Naive thymus-derived CD4-positive, alpha-beta T cell (primary cell): ENCODE measurements at regions of chr17 and their contacts with region 1.

Region 1: GRCh38 chr17:14300575-14301278 is at the start of gene HS3ST3B1:
- DNase-seq: peak; percentile 93 to 100 (median 99)
- ATAC-seq: peak; percentile 90
- H3K4me3 ChIP-seq: peak within 1 kb of the TSS; percentile 99
- H3K4me3 Mint-ChIP-seq: peak within 1 kb of the TSS; percentile 85 to 100 (median 96)
- H3K27ac ChIP-seq: peak within 1 kb of the TSS; percentile 63
- H3K27ac Mint-ChIP-seq: peak within 1 kb of the TSS; percentile 86 to 94 (median 90)
- H3K4me1 ChIP-seq: peaks cover 39 to 44% of the 10 kb centered on the region in 2 donors
- H3K4me1 Mint-ChIP-seq: peaks cover 49 to 69% (median 62%) of the 10 kb centered on the region in 7 donors
- H3K27me3 ChIP-seq: peaks cover 10 to 22% of the 10 kb centered on the region in 2 donors
- H3K27me3 Mint-ChIP-seq: peaks cover 29 to 39% (median 37%) of the 10 kb centered on the region in 5 donors
- total RNA-seq, gene HS3ST3B1: 11.7 to 40.7 (median 30.8) TPM

Region 2: DNA sequence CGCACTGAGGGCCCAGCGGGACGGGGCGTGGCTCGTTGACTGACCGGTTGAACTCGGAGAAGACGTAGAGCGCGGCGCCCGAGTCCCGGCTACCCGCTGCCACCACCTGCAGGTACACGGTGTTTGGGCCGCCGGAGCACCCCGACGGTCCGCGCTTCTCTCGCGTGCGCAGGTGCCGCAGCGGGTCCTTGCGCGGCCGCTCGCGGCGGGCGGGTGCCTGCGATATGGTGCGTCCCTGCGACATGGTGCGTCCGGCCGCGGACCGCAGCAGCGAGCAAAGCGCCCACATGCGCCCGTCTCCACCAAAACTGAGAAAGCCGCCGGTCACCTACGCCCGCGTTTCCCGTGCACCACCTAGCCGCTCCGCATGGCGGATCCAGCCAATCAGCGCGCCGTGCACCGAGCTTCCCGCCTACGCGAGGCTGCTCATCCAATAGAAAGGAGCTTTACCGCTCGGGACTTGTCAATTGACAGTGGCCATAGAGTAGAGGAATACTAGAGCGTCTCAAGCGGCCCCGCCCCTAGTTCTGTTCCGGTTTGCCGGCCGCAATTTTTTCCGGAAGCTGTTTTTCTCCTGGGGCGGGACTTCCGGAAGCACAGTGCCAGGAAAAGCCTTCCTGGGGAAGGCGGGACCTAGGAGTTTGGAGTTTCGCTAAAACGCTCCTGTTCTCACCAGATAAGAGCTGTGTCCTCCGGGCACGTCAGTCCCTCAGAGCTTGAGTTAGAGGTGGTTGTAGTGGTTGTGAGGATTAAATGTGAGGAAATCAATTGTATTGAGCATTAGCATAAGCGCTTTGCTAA is 1282.9 kb before region 1 on chr17 and contains the start of gene ELAC2:
- CTCF ChIA-PET with region 1: no interaction called
- POLR2A ChIA-PET with region 1: interaction called, 12 read pairs
- intact Hi-C with region 1: loop called in 1 of 2 experiments (anchors 2 kb)
- DNase-seq: peak; percentile 86 to 98 (median 95)
- ATAC-seq: peak; percentile 100
- H3K4me3 ChIP-seq: peak within 1 kb of the TSS; percentile 77
- H3K4me3 Mint-ChIP-seq: peak within 1 kb of the TSS; percentile 90 to 99 (median 96)
- H3K27ac ChIP-seq: peak within 1 kb of the TSS; percentile 78
- H3K27ac Mint-ChIP-seq: peak within 1 kb of the TSS; percentile 85 to 99 (median 97)
- H3K4me1 ChIP-seq: peaks cover 6 to 16% of the 10 kb centered on the region in 2 donors
- H3K4me1 Mint-ChIP-seq: peaks cover 18 to 48% (median 35%) of the 10 kb centered on the region in 7 donors
- H3K27me3 ChIP-seq: no peaks in the 10 kb centered on the region
- H3K27me3 Mint-ChIP-seq: no peaks in the 10 kb centered on the region
- total RNA-seq, gene ELAC2: 65.2 to 78.9 (median 75.3) TPM

Region 3: DNA sequence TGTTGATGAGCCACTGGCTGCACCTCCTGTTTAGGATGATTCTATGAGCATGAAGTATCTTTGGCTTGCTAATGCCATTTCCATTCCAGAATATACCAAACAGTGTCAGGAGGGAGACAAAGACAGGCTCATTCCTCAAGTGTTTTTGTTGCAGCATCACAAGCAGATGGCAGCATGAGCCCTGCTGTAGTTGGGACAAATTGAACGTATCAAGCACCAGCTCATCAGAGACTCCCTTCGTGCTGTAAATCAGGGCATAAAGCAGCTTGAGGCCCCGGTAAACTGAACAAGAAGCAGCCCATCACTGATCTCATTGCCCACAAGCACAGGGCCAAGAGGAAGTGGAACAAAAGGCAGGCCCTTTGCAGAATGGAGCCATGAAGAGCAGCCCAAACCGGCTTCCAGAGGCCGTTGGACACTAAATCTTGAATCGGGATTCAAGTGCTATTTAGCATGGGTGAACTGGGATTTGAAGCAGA is 653.1 kb before region 1 on chr17:
- CTCF ChIA-PET with region 1: no interaction called
- POLR2A ChIA-PET with region 1: no interaction called
- intact Hi-C with region 1: loop called in 1 of 2 experiments (anchors 2 kb)
- DNase-seq: no peak
- ATAC-seq: no peak
- H3K4me3 ChIP-seq: no peak overlapping the region
- H3K4me3 Mint-ChIP-seq: no peak overlapping the region
- H3K27ac ChIP-seq: no peak overlapping the region
- H3K27ac Mint-ChIP-seq: no peak overlapping the region
- H3K4me1 ChIP-seq: no peaks in the 10 kb centered on the region
- H3K4me1 Mint-ChIP-seq: no peaks in the 10 kb centered on the region
- H3K27me3 ChIP-seq: no peaks in the 10 kb centered on the region
- H3K27me3 Mint-ChIP-seq: peaks cover 0 to 12% (median 4%) of the 10 kb centered on the region in 5 donors

Region 4: GRCh38 chr17:14069251-14070021 is 231.3 kb before region 1 on chr17 and contains the start of gene COX10:
- CTCF ChIA-PET with region 1: interaction called, 3 read pairs
- POLR2A ChIA-PET with region 1: interaction called, 12 read pairs
- intact Hi-C with region 1: loop called (anchors 1 kb)
- DNase-seq: peak; percentile 71 to 93 (median 78)
- ATAC-seq: peak; percentile 99
- H3K4me3 ChIP-seq: peak within 1 kb of the TSS; percentile 83
- H3K4me3 Mint-ChIP-seq: peak within 1 kb of the TSS; percentile 91 to 98 (median 94)
- H3K27ac ChIP-seq: peak within 1 kb of the TSS; percentile 89
- H3K27ac Mint-ChIP-seq: peak within 1 kb of the TSS; percentile 77 to 97 (median 92)
- H3K4me1 ChIP-seq: peaks cover 7 to 22% of the 10 kb centered on the region in 2 donors
- H3K4me1 Mint-ChIP-seq: peaks cover 29 to 59% (median 49%) of the 10 kb centered on the region in 7 donors
- H3K27me3 ChIP-seq: no peaks in the 10 kb centered on the region
- H3K27me3 Mint-ChIP-seq: no peaks in the 10 kb centered on the region
- total RNA-seq, gene COX10: 16.2 to 30.6 (median 19.3) TPM

Region 5: DNA sequence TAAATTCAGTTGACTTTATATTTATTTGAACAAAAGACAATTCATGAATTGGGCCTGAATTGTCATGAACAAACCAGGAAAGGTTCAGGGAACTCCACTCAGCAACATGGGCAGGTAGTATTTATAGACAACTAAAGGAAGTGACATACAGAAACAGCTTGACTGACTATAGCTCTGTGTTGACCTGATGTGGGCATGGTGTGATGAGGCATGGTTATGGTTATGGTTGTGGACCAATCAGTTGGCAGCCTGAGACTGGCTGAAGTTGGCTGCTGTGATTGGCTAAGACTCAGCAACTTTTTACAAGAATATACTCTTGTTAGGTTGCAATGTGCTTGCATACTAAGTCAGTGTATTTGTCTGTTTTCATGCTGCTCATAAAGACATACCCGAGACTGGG is 108.6 kb after region 1 on chr17:
- CTCF ChIA-PET with region 1: interaction called, 5 read pairs
- POLR2A ChIA-PET with region 1: interaction called, 12 read pairs
- intact Hi-C with region 1: no loop called
- DNase-seq: no peak
- ATAC-seq: no peak
- H3K4me3 ChIP-seq: no peak overlapping the region
- H3K4me3 Mint-ChIP-seq: no peak overlapping the region
- H3K27ac ChIP-seq: no peak overlapping the region
- H3K27ac Mint-ChIP-seq: no peak overlapping the region
- H3K4me1 ChIP-seq: peaks cover 8% of the 10 kb centered on the region in 2 donors
- H3K4me1 Mint-ChIP-seq: peaks cover 11 to 37% (median 18%) of the 10 kb centered on the region in 7 donors
- H3K27me3 ChIP-seq: no peaks in the 10 kb centered on the region
- H3K27me3 Mint-ChIP-seq: no peaks in the 10 kb centered on the region

Region 6: DNA sequence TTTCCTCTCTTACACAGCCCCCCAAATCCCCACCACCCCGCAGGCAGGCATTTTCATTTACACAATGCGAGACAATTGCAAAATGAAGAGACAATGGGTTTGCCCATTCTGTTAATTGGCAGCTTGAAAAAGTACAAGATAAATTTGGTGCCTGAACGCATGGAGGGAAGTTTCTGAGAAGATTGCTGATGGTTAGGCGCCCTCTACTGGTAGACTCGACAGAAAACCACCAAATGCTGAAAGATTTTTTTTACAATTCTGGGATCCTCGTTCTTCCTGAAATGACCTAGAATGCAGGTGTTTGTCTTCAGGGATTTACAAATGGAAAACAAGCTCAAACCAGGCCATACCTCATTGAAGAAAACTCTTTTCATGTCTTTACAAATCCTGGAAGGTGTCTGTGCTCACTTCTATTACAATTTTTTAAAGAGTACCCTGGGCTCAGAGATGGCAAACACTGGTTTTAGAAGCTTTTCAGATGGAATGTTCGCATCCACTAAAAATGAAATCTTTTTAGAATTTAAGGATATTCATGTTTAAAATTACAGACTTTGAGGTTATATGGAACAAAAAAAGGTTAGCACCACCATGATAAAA is 625.9 kb after region 1 on chr17:
- CTCF ChIA-PET with region 1: interaction called, 3 read pairs
- POLR2A ChIA-PET with region 1: no interaction called
- intact Hi-C with region 1: loop called (anchors 1 to 5 kb)
- DNase-seq: peak; percentile 7 to 66 (median 44)
- ATAC-seq: peak; percentile 61
- H3K4me3 ChIP-seq: no peak overlapping the region
- H3K4me3 Mint-ChIP-seq: no peak overlapping the region
- H3K27ac ChIP-seq: no peak overlapping the region
- H3K27ac Mint-ChIP-seq: no peak overlapping the region
- H3K4me1 ChIP-seq: no peaks in the 10 kb centered on the region
- H3K4me1 Mint-ChIP-seq: no peaks in the 10 kb centered on the region
- H3K27me3 ChIP-seq: no peaks in the 10 kb centered on the region
- H3K27me3 Mint-ChIP-seq: peaks cover 0 to 23% (median 15%) of the 10 kb centered on the region in 5 donors

Region 7: GRCh38 chr17:15083225-15083624 is 782.5 kb after region 1 on chr17:
- CTCF ChIA-PET with region 1: no interaction called
- POLR2A ChIA-PET with region 1: no interaction called
- intact Hi-C with region 1: no loop called
- DNase-seq: no peak
- ATAC-seq: no peak
- H3K4me3 ChIP-seq: no peak overlapping the region
- H3K4me3 Mint-ChIP-seq: no peak overlapping the region
- H3K27ac ChIP-seq: no peak overlapping the region
- H3K27ac Mint-ChIP-seq: no peak overlapping the region
- H3K4me1 ChIP-seq: no peaks in the 10 kb centered on the region
- H3K4me1 Mint-ChIP-seq: no peaks in the 10 kb centered on the region
- H3K27me3 ChIP-seq: no peaks in the 10 kb centered on the region
- H3K27me3 Mint-ChIP-seq: peaks cover 0 to 34% (median 18%) of the 10 kb centered on the region in 5 donors